HEK293T (cell line): ENCODE measurements at regions of chr1 and their contacts with region 1.

Region 1: DNA sequence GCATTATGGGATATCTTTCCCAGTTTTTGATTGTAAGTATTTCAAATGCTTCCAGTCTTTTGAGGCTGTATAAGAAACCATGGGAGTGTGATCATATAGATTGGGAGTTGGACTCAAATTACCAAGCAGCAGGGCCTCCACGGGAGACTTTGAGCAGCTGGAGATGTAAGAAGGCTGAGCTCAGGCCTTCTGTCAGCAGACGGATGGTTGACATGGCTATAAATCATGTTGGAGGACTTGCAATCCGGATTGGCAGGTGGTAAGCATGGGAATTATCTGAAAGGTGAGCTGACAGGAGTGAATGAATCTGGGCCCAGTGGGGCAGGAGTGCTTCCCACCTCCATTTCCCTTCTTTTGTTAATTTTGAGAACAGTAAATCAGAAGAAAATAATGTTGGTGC is 83.2 kb upstream of the PPM1J start:
- DNase-seq: no peak

Region 2: DNA sequence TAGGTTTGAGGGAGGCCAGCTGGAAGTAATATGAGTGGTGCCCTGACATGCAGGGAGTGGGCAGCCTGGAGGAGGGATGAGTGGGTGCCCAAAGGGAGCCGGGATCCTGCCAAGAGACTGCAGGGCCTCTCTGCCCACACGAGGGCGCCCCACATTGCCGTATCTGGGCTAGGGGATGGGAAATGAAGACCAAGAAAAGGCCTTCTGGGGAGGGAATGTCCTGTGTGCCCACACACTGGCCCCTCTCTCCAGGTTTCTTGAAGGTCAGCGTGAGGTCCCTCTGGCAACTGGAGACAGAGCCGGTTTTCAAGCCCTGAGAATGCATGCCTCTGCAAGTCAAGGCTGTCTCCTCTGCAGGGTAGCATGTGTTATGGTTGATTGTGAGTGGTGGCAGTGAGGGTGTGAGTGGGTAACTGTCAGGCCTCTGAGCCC is 11.0 kb after region 1 on chr1:
- CTCF ChIA-PET with region 1: interaction called, 11 read pairs
- POLR2A ChIA-PET with region 1: interaction called, 3 read pairs
- DNase-seq: peak; percentile 87

Region 3: GRCh38 chr1:112878321-112878720 is 80.0 kb after region 1 on chr1:
- CTCF ChIA-PET with region 1: no interaction called
- POLR2A ChIA-PET with region 1: no interaction called
- DNase-seq: no peak